Endothelial cell of umbilical vein (primary cell): ENCODE measurements at regions of chr2 and their contacts with region 1.

Region 1: GRCh38 chr2:134897932-134898331 is 20.7 kb upstream of the CCNT2 start:
- DNase-seq: peak; percentile 20
- H3K4me3 ChIP-seq: no peak overlapping the region
- H3K27ac ChIP-seq: no peak overlapping the region
- H3K4me1 ChIP-seq: no peaks in the 10 kb centered on the region
- H3K27me3 ChIP-seq: no peaks in the 10 kb centered on the region
- CTCF ChIP-seq: peak in 1 of 2 donors; percentile 6
- POLR2A ChIP-seq: no peak

Region 2: GRCh38 chr2:133886735-133887660 is 1010.9 kb before region 1 on chr2:
- CTCF ChIA-PET with region 1: interaction called, 7 read pairs
- POLR2A ChIA-PET with region 1: no interaction called
- dilution Hi-C with region 1: no loop called
- intact Hi-C with region 1: loop called (anchors 5 kb)
- DNase-seq: peak; percentile 61
- H3K4me3 ChIP-seq: no peak overlapping the region
- H3K27ac ChIP-seq: no peak overlapping the region
- H3K4me1 ChIP-seq: peaks cover 6% of the 10 kb centered on the region
- H3K27me3 ChIP-seq: peaks cover 0 to 26% of the 10 kb centered on the region in 2 experiments
- CTCF ChIP-seq: peak; percentile 60 to 65
- POLR2A ChIP-seq: no peak

Region 3: DNA sequence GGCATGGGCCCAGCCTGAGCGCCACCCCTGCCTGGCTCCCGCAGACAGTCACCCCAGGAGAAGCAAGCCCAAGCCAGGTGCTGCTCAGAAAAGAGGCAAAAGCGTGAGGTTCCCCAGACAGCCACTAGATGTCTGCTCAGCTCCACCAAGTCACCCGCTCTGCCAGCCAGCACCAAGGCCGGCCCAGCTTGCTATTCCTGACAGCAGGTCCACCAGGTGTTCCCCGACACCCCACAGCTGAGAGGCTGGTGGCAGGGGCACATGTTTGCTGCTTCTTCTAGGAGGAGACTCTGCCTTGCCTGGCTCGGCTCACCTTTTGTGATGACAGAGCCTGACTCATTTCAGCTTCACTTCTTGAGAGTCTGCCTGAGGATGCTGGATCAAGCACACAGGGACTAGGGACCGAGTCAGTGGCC is 437.3 kb before region 1 on chr2:
- CTCF ChIA-PET with region 1: interaction called, 33 read pairs
- POLR2A ChIA-PET with region 1: no interaction called
- dilution Hi-C with region 1: no loop called
- intact Hi-C with region 1: loop called (anchors 1 kb)
- DNase-seq: peak; percentile 52
- H3K4me3 ChIP-seq: no peak overlapping the region
- H3K27ac ChIP-seq: no peak overlapping the region
- H3K4me1 ChIP-seq: peaks cover 5% of the 10 kb centered on the region
- H3K27me3 ChIP-seq: no peaks in the 10 kb centered on the region
- CTCF ChIP-seq: peak; percentile 50 to 86
- POLR2A ChIP-seq: no peak

Region 4: DNA sequence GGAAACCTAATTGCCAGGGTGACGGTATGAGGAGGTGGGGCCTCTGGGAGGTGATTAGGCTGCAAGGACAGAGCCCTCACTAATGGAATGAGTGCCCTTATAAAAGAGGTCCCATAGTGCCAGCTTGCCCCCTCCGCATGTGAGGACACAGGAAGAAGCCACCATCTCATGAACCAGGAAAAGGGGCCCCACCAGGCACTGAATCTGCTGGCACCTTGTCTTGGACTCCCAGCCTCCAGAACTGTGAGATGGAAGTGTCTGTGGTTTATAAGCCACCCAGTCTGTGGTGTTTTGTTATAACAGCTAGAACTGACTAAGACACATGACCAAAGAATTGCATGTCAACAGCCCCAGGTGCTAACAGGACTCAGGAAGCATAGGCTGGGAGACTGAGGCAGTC is 429.8 kb before region 1 on chr2:
- CTCF ChIA-PET with region 1: interaction called, 10 read pairs
- POLR2A ChIA-PET with region 1: no interaction called
- dilution Hi-C with region 1: no loop called
- intact Hi-C with region 1: no loop called
- DNase-seq: no peak
- H3K4me3 ChIP-seq: no peak overlapping the region
- H3K27ac ChIP-seq: no peak overlapping the region
- H3K4me1 ChIP-seq: no peaks in the 10 kb centered on the region
- H3K27me3 ChIP-seq: no peaks in the 10 kb centered on the region
- CTCF ChIP-seq: no peak
- POLR2A ChIP-seq: no peak

Region 5: DNA sequence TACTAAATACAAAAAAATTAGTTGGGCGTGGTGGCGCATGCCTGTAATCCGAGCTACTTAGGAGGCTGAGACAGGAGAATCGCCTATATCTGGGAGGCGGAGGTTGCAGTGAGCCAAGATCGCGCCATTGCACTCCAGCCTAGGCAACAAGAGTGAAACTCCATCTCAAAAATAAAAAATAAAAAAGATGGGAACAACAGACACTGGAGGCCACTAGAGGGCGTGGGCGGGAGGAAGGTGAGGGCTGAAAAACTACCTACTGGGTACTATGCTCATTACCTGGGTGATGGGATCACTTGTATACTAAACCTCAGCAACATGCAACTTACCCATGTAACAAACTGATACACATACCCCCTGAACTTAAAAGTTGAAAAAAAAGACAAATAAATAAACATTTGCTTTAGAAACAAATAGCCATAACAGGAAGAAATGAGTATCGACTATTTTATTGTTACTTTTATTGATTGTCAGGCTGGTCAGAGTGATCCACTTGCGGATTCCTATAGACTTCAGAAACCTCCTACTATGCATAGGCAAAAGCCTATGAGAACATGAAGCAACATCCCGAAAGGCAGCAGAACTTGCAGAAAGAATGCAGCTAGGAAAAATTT is 240.2 kb before region 1 on chr2:
- CTCF ChIA-PET with region 1: interaction called, 6 read pairs
- POLR2A ChIA-PET with region 1: no interaction called
- dilution Hi-C with region 1: no loop called
- intact Hi-C with region 1: loop called (anchors 1 kb)
- DNase-seq: peak; percentile 22
- H3K4me3 ChIP-seq: no peak overlapping the region
- H3K27ac ChIP-seq: no peak overlapping the region
- H3K4me1 ChIP-seq: no peaks in the 10 kb centered on the region
- H3K27me3 ChIP-seq: peaks cover 0 to 3% of the 10 kb centered on the region in 2 experiments
- CTCF ChIP-seq: peak; percentile 54 to 59
- POLR2A ChIP-seq: no peak

Region 6: GRCh38 chr2:135694711-135695110 is 796.8 kb after region 1 on chr2:
- CTCF ChIA-PET with region 1: no interaction called
- POLR2A ChIA-PET with region 1: no interaction called
- dilution Hi-C with region 1: no loop called
- intact Hi-C with region 1: no loop called
- DNase-seq: peak; percentile 69
- H3K4me3 ChIP-seq: no peak overlapping the region
- H3K27ac ChIP-seq: no peak overlapping the region
- H3K4me1 ChIP-seq: no peaks in the 10 kb centered on the region
- H3K27me3 ChIP-seq: no peaks in the 10 kb centered on the region
- CTCF ChIP-seq: no peak
- POLR2A ChIP-seq: no peak